HEK293T (cell line): ENCODE measurements at regions of chr4 and their contacts with region 1.

Region 1: DNA sequence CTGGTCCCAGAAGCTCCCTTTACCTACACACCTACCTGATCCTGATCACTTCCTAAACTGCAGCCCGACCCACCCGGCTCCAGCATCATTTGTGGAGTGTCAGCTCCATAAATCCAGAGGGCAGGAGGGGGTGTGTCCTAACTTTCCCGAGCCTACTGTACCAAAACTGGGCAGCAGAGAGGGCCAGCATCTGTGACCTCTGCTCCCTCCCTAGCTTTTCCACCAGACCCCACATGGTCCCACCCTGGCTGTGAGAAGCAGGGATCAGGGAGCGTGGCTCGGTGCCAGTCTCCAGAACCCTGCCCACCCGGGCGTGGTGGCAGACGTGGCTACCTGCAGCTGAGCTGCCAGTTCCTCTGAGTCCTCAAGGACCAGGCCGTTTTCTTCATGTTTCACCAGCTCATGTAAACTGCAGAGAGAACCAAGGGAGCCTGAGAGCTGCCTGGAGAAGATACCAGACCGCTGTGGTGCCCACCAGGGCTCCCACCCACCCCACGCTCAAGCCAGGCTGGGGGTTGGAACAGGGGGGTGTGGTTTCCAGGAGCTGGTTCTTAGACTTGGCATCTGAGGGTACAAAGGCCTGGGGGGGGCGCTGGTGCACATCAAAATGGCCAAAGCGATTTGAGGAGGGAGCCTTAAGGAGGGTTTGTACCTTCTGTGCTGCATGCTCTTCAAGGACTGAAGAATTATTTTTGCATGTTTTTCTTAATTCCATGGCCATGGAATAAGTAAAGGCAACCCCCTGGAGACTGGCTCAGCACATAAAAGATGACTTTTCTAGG is 76.7 kb upstream of the DRD5 start:
- DNase-seq: no peak

Region 2: DNA sequence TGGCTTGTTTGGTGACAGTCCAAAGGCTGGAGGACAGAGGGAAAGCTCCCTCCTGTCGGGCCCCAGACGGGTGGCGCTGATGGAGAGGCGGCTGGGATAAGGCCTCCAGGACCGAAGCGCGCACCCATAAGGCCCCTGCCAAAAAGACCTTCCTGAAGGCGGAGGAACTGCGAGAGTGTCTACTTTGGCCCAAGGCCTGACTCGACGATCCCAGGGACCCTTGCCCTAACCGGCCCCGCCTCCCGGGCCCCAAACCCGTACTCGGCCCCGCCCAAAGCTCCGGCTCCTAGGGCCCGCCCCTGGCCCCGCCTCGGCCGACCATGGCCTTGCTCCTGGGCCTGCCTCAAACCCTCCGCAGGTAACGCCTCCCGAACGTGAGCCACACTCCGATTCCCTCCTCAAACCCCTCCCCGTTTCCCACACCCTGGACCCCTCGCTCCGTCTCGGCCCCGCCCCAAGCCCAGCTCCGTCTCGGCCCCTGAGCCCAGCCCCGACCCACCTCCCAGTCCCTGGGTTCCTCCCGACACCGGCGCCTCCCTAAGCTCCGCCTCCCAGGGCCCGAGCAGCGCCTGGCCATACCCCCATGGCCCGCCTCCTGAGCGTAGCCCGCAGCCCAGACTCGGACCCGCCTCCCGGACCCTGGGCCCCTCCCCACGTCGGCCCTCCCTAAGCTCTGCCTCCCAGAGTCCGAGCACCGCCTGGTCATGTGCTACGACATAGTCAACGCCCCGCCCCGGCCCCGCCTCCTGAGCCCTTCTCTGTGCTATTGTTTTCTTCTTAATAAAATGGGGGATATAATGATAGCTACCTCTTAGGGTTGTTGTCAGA is 13.3 kb before region 1 on chr4:
- CTCF ChIA-PET with region 1: interaction called, 11 read pairs
- POLR2A ChIA-PET with region 1: no interaction called
- DNase-seq: peak; percentile 89

Region 3: GRCh38 chr4:9771034-9771433 is 66.3 kb after region 1 on chr4:
- CTCF ChIA-PET with region 1: no interaction called
- POLR2A ChIA-PET with region 1: no interaction called
- DNase-seq: no peak

Region 4: GRCh38 chr4:10013722-10014121 is 309.0 kb after region 1 on chr4:
- CTCF ChIA-PET with region 1: interaction called, 10 read pairs
- POLR2A ChIA-PET with region 1: no interaction called
- DNase-seq: peak; percentile 62

Region 5: DNA sequence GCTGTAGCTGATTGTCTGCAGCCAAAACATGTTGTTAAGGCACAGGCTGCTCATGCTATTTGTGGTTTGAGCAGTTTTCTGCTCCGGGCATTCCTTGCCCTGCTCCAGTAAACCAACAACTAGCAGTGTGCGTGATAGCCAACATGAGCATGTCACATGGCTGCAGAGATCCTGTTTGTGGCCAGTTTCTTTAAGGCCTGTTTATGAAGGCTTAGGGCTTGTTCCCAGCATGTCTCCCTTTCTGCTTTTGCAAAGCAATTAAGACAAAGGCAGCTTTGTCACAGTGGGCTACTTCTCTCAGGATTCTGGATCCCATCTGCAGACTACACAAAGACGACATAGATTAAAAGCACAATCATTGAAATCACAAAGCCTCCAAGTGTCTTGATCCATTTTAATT is 592.0 kb after region 1 on chr4:
- CTCF ChIA-PET with region 1: no interaction called
- POLR2A ChIA-PET with region 1: no interaction called
- DNase-seq: no peak